ENCODE measurements at regions of chr10 and their contacts with region 1.

Region 1: DNA sequence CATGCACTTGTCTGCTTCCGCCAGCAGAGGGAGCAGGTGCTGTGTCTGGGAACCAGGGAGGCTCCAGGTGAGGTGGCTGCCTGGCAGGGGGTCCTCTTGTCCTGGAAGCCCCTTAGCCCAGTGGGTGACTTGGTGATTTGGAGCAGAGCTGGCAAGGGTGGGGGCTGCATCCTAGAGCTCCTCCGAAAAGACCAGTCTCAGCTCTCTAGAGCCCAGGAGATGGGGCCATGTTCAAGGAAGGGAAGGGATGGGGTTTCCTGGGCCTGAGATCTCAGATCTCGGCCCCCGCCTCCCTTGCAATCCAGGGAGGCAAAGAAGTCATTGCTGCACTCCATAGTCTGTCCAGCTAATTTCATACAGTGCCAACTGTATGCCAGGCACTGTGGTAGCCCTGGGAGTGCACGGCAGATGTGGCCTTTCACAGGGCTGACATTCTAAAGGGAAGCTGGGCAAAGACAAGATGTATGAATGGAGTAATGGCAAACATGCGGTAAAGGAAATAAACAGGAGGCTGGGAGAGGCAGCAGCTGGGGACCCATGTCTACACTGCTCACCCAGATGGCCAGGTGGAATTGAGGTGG is 20.4 kb upstream of the SFRP5 start:
- DNase-seq: peak; percentile 59 to 83 (median 66)
- ATAC-seq: peak; percentile 77
- H3K4me3 ChIP-seq: no peak overlapping the region
- H3K4me3 Mint-ChIP-seq: no peak overlapping the region
- H3K27ac ChIP-seq: no peak overlapping the region
- H3K27ac Mint-ChIP-seq: no peak overlapping the region
- H3K4me1 ChIP-seq: peaks cover 27% of the 10 kb centered on the region
- H3K4me1 Mint-ChIP-seq: peaks cover 29% of the 10 kb centered on the region
- H3K27me3 ChIP-seq: no peaks in the 10 kb centered on the region
- H3K27me3 Mint-ChIP-seq: peaks cover 5% of the 10 kb centered on the region
- CTCF ChIP-seq: peak; percentile 95

Region 2: GRCh38 chr10:97869091-97870042 is 77.1 kb after region 1 on chr10:
- CTCF ChIA-PET with region 1: interaction called, 18 read pairs
- POLR2A ChIA-PET with region 1: interaction called, 6 read pairs
- intact Hi-C with region 1: loop called (anchors 1 kb)
- DNase-seq: peak; percentile 70 to 93 (median 78)
- ATAC-seq: peak; percentile 100
- H3K4me3 ChIP-seq: no peak overlapping the region
- H3K4me3 Mint-ChIP-seq: no peak overlapping the region
- H3K27ac ChIP-seq: peak overlapping the region in 1 of 2 donors; percentile 4
- H3K27ac Mint-ChIP-seq: peak overlapping the region; percentile 66
- H3K4me1 ChIP-seq: peaks cover 14% of the 10 kb centered on the region
- H3K4me1 Mint-ChIP-seq: peaks cover 11% of the 10 kb centered on the region
- H3K27me3 ChIP-seq: no peaks in the 10 kb centered on the region
- H3K27me3 Mint-ChIP-seq: peaks cover 11% of the 10 kb centered on the region
- CTCF ChIP-seq: peak; percentile 86

Measured in CD4-positive, alpha-beta T cell (primary cell).